ENCODE measurements at regions of chr1 and their contacts with region 1.

Region 1: DNA sequence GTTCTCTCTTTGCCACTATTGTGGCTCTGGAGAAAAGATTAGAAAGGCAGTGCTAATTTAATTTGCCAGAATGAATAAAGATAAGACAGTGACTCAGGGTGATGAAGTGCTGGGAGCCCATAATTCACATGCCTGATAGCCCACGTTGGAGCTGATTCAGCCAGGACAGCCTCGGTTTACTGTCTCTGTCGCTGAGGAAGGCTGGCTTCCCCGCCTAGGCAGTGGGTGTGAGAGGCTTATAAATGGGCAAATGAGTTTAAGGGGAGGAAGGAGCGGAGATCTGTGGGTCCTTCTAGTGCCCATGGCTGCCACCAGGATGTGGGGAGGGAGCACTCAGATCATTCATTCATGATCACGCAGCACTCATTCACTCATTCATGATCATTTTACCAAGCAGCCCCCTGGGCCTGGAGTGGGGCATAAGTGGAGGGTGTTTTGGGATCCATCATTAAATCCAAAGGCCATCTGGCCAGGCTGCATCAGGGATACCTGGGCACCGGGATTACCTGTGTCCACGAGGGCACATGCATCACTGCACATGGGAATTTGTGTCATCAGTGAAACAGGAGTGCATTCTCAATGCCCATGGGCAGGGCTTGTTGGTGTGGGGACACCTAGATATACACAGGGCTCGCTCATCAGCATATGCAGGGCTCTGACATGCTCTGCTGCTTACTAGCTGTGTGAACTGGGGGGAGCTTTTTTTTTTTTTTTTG is 315.4 kb downstream of the MATN1 start:
- DNase-seq: peak in 2 of 7 donors; percentile 16 to 20
- H3K4me3 ChIP-seq: no peak overlapping the region
- H3K27ac ChIP-seq: no peak overlapping the region
- H3K4me1 ChIP-seq: no peaks in the 10 kb centered on the region
- H3K27me3 ChIP-seq: peaks cover 4% of the 10 kb centered on the region
- CTCF ChIP-seq: no peak
- POLR2A ChIP-seq: no peak

Region 2: GRCh38 chr1:29394521-29395225 is 1013.4 kb before region 1 on chr1:
- intact Hi-C with region 1: loop called in 1 of 2 experiments (anchors 5 kb)
- DNase-seq: no peak
- H3K4me3 ChIP-seq: no peak overlapping the region
- H3K27ac ChIP-seq: no peak overlapping the region
- H3K4me1 ChIP-seq: no peaks in the 10 kb centered on the region
- H3K27me3 ChIP-seq: no peaks in the 10 kb centered on the region
- CTCF ChIP-seq: no peak
- POLR2A ChIP-seq: no peak

Region 3: GRCh38 chr1:30218438-30218837 is 189.6 kb before region 1 on chr1:
- intact Hi-C with region 1: no loop called
- DNase-seq: no peak
- H3K4me3 ChIP-seq: no peak overlapping the region
- H3K27ac ChIP-seq: peak overlapping the region in 1 of 5 donors; percentile 11
- H3K4me1 ChIP-seq: no peaks in the 10 kb centered on the region
- H3K27me3 ChIP-seq: no peaks in the 10 kb centered on the region
- CTCF ChIP-seq: no peak
- POLR2A ChIP-seq: no peak

Measured in adrenal gland (tissue), 19 donors.